OCI-LY7 (cell line): ENCODE measurements at regions of chr1 and their contacts with region 1.

Region 1: GRCh38 chr1:1890506-1891348 is at the start of gene GNB1:
- DNase-seq: peak; percentile 96
- H3K4me3 ChIP-seq: peak within 1 kb of the TSS; percentile 97
- H3K27ac ChIP-seq: peak within 1 kb of the TSS; percentile 82
- H3K4me1 ChIP-seq: peaks cover 60% of the 10 kb centered on the region
- CTCF ChIP-seq: no peak
- total RNA-seq, gene GNB1: 86.9 and 101 TPM in 2 replicates

Region 2: GRCh38 chr1:1841575-1841995 is 49.1 kb before region 1 on chr1:
- CTCF ChIA-PET with region 1: no interaction called
- POLR2A ChIA-PET with region 1: interaction called, 5 read pairs
- intact Hi-C with region 1: loop called (anchors 2 kb)
- DNase-seq: peak; percentile 46
- H3K4me3 ChIP-seq: peak overlapping the region; percentile 56
- H3K27ac ChIP-seq: peak overlapping the region; percentile 97
- H3K4me1 ChIP-seq: peaks cover 87% of the 10 kb centered on the region
- CTCF ChIP-seq: peak; percentile 66

Region 3: GRCh38 chr1:2594001-2594640 is 703.4 kb after region 1 on chr1:
- CTCF ChIA-PET with region 1: no interaction called
- POLR2A ChIA-PET with region 1: no interaction called
- intact Hi-C with region 1: no loop called
- DNase-seq: no peak
- H3K4me3 ChIP-seq: no peak overlapping the region
- H3K27ac ChIP-seq: no peak overlapping the region
- H3K4me1 ChIP-seq: peaks cover 5% of the 10 kb centered on the region
- CTCF ChIP-seq: no peak